Activated B cell treated with CpG ODN at 0.5 μM for 24 hours (primary cell): ENCODE measurements at regions of chr2 and their contacts with region 1.

Region 1: GRCh38 chr2:241110607-241111439 is 8.7 kb upstream of the MTERF4 start:
- DNase-seq: peak; percentile 46
- ATAC-seq: peak; percentile 80
- H3K4me3 Mint-ChIP-seq: peak overlapping the region; percentile 70
- H3K27ac Mint-ChIP-seq: peak overlapping the region; percentile 94
- H3K4me1 Mint-ChIP-seq: peaks cover 53% of the 10 kb centered on the region
- H3K27me3 Mint-ChIP-seq: no peaks in the 10 kb centered on the region
- CTCF ChIP-seq: no peak

Region 2: DNA sequence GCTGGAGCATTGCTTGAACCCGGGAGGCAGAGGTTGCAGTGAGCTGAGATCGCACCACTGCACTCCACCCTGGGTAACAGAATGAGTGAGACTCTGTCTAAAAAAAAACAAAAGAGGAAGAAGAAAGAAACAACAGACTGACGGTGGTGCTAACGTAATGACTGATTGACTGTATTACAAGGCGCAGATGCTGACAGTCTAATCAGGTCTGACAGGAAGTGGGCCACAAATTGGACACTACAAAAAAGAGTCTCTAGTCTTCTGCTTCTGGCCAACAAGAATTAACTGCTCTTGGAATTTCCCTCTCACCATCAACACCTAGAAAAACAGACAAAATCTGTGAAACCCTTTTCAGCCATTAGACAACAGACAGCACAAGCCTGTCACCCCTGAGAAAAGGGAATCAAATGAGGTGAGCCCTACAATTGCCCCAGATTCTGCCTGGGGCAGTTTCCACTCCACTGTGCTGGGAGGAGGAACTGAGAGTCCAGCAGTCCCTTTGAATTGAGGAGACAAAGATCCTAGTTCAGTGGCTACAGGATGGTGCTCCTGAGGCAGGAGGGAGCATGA is 69.1 kb before region 1 on chr2:
- CTCF ChIA-PET with region 1: no interaction called
- POLR2A ChIA-PET with region 1: interaction called, 6 read pairs
- intact Hi-C with region 1: loop called (anchors 1 kb)
- DNase-seq: no peak
- ATAC-seq: peak; percentile 75
- H3K4me3 Mint-ChIP-seq: peak overlapping the region; percentile 74
- H3K27ac Mint-ChIP-seq: peak overlapping the region; percentile 96
- H3K4me1 Mint-ChIP-seq: peaks cover 70% of the 10 kb centered on the region
- H3K27me3 Mint-ChIP-seq: no peaks in the 10 kb centered on the region
- CTCF ChIP-seq: no peak

Region 3: DNA sequence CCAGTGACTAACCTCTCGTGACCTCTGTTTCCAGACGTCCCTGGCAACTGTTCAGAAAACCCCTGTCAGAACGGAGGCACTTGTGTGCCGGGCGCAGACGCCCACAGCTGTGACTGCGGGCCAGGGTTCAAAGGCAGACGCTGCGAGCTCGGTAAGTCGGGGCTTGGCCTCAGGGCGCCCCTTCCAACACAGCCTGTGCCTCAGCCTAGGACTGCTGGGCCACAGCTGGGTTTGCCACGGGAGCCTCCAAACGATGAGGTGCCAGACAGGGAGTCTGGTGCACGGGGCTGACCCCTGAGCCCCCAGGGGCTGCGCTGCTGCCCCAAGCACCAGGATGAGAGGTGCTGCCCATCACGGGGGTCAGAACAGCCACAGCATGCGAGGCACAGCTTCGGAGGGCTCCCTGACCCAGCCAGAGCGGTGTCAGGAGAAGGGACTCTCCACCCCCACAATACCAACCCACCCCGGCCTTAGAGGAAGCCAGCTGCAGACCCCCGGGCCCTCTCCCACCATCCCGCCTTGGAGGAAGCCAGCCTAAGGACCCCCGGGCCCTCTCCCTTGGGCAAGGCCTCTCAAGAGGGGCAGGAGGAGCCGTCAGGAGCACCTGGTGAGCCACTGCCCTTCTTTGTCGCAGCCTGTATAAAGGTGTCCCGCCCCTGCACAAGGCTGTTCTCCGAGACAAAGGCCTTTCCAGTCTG is 29.0 kb before region 1 on chr2:
- CTCF ChIA-PET with region 1: interaction called, 12 read pairs
- POLR2A ChIA-PET with region 1: interaction called, 6 read pairs
- intact Hi-C with region 1: no loop called
- DNase-seq: no peak
- ATAC-seq: no peak
- H3K4me3 Mint-ChIP-seq: no peak overlapping the region
- H3K27ac Mint-ChIP-seq: no peak overlapping the region
- H3K4me1 Mint-ChIP-seq: peaks cover 12% of the 10 kb centered on the region
- H3K27me3 Mint-ChIP-seq: no peaks in the 10 kb centered on the region
- CTCF ChIP-seq: no peak

Region 4: DNA sequence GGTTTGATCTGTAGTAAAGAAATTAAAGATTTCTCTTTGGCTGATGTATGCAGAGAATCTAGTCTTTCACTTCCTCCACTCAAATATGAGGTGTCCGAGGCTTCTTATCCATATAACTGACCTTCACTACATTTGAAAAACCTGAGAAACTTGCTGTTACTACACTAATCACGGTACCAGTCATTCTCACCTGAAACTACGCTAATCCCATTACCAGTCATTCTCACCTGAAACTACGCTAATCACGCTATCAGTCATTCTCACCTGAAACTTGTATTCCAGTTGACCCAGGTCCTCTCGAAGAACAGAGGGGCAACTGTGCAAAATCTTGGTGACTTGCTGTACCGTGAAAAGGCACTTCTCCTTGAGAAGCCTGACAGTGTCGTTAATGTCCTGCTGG is 13.8 kb before region 1 on chr2:
- CTCF ChIA-PET with region 1: no interaction called
- POLR2A ChIA-PET with region 1: interaction called, 142 read pairs
- intact Hi-C with region 1: loop called (anchors 1 kb)
- DNase-seq: no peak
- ATAC-seq: no peak
- H3K4me3 Mint-ChIP-seq: no peak overlapping the region
- H3K27ac Mint-ChIP-seq: no peak overlapping the region
- H3K4me1 Mint-ChIP-seq: peaks cover 68% of the 10 kb centered on the region
- H3K27me3 Mint-ChIP-seq: no peaks in the 10 kb centered on the region
- CTCF ChIP-seq: no peak

Region 5: GRCh38 chr2:241123816-241124536 is 13.2 kb after region 1 on chr2:
- CTCF ChIA-PET with region 1: no interaction called
- POLR2A ChIA-PET with region 1: interaction called, 91 read pairs
- intact Hi-C with region 1: loop called (anchors 1 kb)
- DNase-seq: no peak
- ATAC-seq: no peak
- H3K4me3 Mint-ChIP-seq: no peak overlapping the region
- H3K27ac Mint-ChIP-seq: peak overlapping the region; percentile 69
- H3K4me1 Mint-ChIP-seq: peaks cover 46% of the 10 kb centered on the region
- H3K27me3 Mint-ChIP-seq: no peaks in the 10 kb centered on the region
- CTCF ChIP-seq: no peak

Region 6: DNA sequence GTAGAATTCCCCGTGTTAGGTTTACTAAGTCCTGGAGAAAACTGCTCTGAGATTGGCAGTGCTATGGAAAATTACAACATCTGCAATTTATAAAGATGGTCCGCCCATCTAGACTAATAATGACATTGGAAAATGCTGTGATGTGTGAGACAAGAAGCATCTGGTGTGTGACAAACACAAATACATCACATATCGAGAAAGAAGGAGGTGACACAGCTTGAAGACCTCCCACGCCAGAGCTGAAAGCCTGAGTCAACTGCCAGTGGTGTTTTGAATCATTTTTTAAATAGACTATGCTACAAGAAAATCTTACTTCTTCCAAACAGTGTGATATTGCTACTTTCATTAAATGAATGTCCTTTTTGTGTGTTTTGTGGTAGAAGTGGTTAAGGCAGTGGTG is 69.1 kb after region 1 on chr2:
- CTCF ChIA-PET with region 1: no interaction called
- POLR2A ChIA-PET with region 1: no interaction called
- intact Hi-C with region 1: no loop called
- DNase-seq: no peak
- ATAC-seq: no peak
- H3K4me3 Mint-ChIP-seq: no peak overlapping the region
- H3K27ac Mint-ChIP-seq: no peak overlapping the region
- H3K4me1 Mint-ChIP-seq: no peaks in the 10 kb centered on the region
- H3K27me3 Mint-ChIP-seq: no peaks in the 10 kb centered on the region
- CTCF ChIP-seq: no peak